IMR-90 (cell line): ENCODE measurements at regions of chr7 and their contacts with region 1.

Region 1: GRCh38 chr7:7662527-7662926 is 22.0 kb downstream of the UMAD1 start:
- DNase-seq: peak; percentile 34
- ATAC-seq: peak; percentile 51
- H3K4me3 ChIP-seq: no peak overlapping the region
- H3K27ac ChIP-seq: no peak overlapping the region
- H3K4me1 ChIP-seq: no peaks in the 10 kb centered on the region
- H3K27me3 ChIP-seq: no peaks in the 10 kb centered on the region
- CTCF ChIP-seq: peak; percentile 55
- POLR2A ChIP-seq: no peak
- RAD21 ChIP-seq: peak; percentile 61

Region 2: GRCh38 chr7:6443351-6443941 is 1219.1 kb before region 1 on chr7:
- CTCF ChIA-PET with region 1: no interaction called
- POLR2A ChIA-PET with region 1: interaction called, 10 read pairs
- dilution Hi-C with region 1: no loop called
- in situ Hi-C with region 1: no loop called
- intact Hi-C with region 1: no loop called
- DNase-seq: peak; percentile 96
- ATAC-seq: peak; percentile 64
- H3K4me3 ChIP-seq: no peak overlapping the region
- H3K27ac ChIP-seq: peak overlapping the region; percentile 87
- H3K4me1 ChIP-seq: peaks cover 21% of the 10 kb centered on the region
- H3K27me3 ChIP-seq: no peaks in the 10 kb centered on the region
- CTCF ChIP-seq: no peak
- POLR2A ChIP-seq: no peak
- RAD21 ChIP-seq: no peak

Region 3: DNA sequence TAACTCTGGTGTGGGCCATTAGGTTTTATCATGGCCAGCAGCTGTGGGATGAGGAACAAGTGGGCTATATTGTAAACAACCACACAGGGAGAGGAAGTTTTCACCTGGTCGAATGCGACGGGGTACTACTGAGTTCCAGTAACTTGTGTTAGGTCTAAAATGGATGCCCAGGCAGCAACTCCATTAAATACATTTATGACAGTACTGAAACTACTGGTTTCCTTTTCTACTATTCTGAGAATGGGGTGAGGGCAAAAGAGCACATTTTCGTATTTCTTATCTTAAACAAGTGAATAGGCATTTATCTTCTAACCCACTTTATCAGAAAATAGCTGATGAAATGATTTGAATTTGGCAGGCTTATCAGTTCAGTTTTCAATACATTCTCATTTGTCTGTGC is 370.4 kb before region 1 on chr7:
- CTCF ChIA-PET with region 1: no interaction called
- POLR2A ChIA-PET with region 1: no interaction called
- dilution Hi-C with region 1: no loop called
- in situ Hi-C with region 1: no loop called
- intact Hi-C with region 1: no loop called
- DNase-seq: no peak
- ATAC-seq: no peak
- H3K4me3 ChIP-seq: no peak overlapping the region
- H3K27ac ChIP-seq: no peak overlapping the region
- H3K4me1 ChIP-seq: no peaks in the 10 kb centered on the region
- H3K27me3 ChIP-seq: no peaks in the 10 kb centered on the region
- CTCF ChIP-seq: no peak
- POLR2A ChIP-seq: no peak
- RAD21 ChIP-seq: no peak